ENCODE measurements at regions of chr6 and their contacts with region 1.

Region 1: GRCh38 chr6:3258720-3259490 is at the start of gene PSMG4:
- DNase-seq: peak; percentile 65
- H3K4me3 ChIP-seq: peak within 1 kb of the TSS; percentile 98
- H3K27ac ChIP-seq: peak within 1 kb of the TSS; percentile 47
- H3K27me3 ChIP-seq: peaks cover 15% of the 10 kb centered on the region
- CTCF ChIP-seq: no peak
- polyA plus RNA-seq, gene PSMG4: 15.3 and 15.8 TPM in 2 replicates

Region 2: GRCh38 chr6:3157131-3157927 is 101.6 kb before region 1 on chr6 and contains the start of gene TUBB2A:
- CTCF ChIA-PET with region 1: interaction called, 3 read pairs
- POLR2A ChIA-PET with region 1: interaction called, 13 read pairs
- DNase-seq: peak; percentile 38
- H3K4me3 ChIP-seq: peak within 1 kb of the TSS; percentile 85
- H3K27ac ChIP-seq: peak within 1 kb of the TSS; percentile 52
- H3K27me3 ChIP-seq: no peaks in the 10 kb centered on the region
- CTCF ChIP-seq: peak; percentile 35
- polyA plus RNA-seq, gene TUBB2A: 111 and 138 TPM in 2 replicates

Region 3: GRCh38 chr6:3281631-3282475 is 22.9 kb after region 1 on chr6:
- CTCF ChIA-PET with region 1: no interaction called
- POLR2A ChIA-PET with region 1: no interaction called
- DNase-seq: peak; percentile 13
- H3K4me3 ChIP-seq: no peak overlapping the region
- H3K27ac ChIP-seq: peak overlapping the region; percentile 34
- H3K27me3 ChIP-seq: no peaks in the 10 kb centered on the region
- CTCF ChIP-seq: no peak